ENCODE measurements at regions of chr17 and their contacts with region 1.

Region 1: DNA sequence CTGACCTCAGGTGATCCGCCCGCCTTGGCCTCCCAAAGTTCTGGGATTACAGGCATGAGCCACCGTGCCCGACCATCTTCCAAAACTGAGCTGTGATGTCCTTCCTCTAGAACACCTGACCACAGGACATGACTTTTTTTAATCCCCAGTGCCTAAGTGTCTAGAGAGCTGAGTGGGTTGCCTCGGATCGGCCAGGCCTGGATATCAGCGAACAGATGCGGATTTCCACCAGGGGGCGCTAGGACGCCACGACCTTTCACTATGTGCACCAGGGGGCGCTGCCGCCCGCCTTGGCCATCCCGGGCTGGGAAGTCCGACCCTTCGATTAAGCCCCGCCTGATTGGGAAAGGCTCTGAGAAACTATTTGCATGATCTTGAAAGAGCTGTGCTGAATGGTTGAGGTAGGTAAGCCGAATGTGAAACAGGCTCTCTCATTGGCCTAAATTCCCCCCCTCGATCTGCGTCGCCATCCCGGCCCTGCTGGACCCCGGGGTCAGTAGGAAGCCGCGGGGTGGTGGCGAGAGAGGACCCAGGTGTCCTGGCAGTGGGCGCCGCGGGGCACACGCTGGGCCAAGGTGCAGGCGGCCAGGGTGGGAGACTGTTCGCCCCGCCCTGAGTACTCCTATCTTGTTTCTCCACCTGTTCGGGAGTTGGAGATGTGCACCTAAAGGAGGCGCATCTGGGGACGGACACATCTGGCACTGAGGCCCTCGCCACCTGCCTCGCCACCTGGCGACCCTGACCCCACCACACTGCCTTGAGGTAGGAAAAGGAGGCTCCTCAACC is at the start of gene ACBD4:
- DNase-seq: peak; percentile 94 to 95
- ATAC-seq: peak; percentile 89
- H3K4me3 ChIP-seq: peak within 1 kb of the TSS; percentile 62 to 88 (median 70)
- H3K27ac ChIP-seq: peak within 1 kb of the TSS; percentile 79 to 89 (median 80)
- H3K4me1 ChIP-seq: peaks cover 25 to 31% of the 10 kb centered on the region in 2 donors
- H3K27me3 ChIP-seq: no peaks in the 10 kb centered on the region
- CTCF ChIP-seq: peak; percentile 100
- POLR2A ChIP-seq: peak; percentile 44 to 52
- total RNA-seq, gene ACBD4: 2.2 to 3.2 (median 2.5) TPM

Region 2: GRCh38 chr17:44919885-44920564 is 215.4 kb before region 1 on chr17:
- in situ Hi-C with region 1: loop called in 2 of 4 experiments (anchors 10 to 25 kb)
- intact Hi-C with region 1: loop called (anchors 1 kb)
- DNase-seq: peak; percentile 66 to 73
- ATAC-seq: peak; percentile 91 to 92
- H3K4me3 ChIP-seq: no peak overlapping the region
- H3K27ac ChIP-seq: no peak overlapping the region
- H3K4me1 ChIP-seq: peaks cover 0 to 8% of the 10 kb centered on the region in 2 donors
- H3K27me3 ChIP-seq: no peaks in the 10 kb centered on the region
- CTCF ChIP-seq: peak; percentile 70 to 88 (median 81)
- POLR2A ChIP-seq: no peak

Region 3: GRCh38 chr17:45098869-45099616 is 36.3 kb before region 1 on chr17:
- in situ Hi-C with region 1: no loop called
- intact Hi-C with region 1: loop called (anchors 2 kb)
- DNase-seq: peak; percentile 80 to 89
- ATAC-seq: peak; percentile 79 to 83
- H3K4me3 ChIP-seq: no peak overlapping the region
- H3K27ac ChIP-seq: peak overlapping the region; percentile 18 to 97 (median 80)
- H3K4me1 ChIP-seq: peaks cover 41 to 60% of the 10 kb centered on the region in 2 donors
- H3K27me3 ChIP-seq: no peaks in the 10 kb centered on the region
- CTCF ChIP-seq: peak; percentile 88 to 94 (median 91)
- POLR2A ChIP-seq: no peak

Region 4: DNA sequence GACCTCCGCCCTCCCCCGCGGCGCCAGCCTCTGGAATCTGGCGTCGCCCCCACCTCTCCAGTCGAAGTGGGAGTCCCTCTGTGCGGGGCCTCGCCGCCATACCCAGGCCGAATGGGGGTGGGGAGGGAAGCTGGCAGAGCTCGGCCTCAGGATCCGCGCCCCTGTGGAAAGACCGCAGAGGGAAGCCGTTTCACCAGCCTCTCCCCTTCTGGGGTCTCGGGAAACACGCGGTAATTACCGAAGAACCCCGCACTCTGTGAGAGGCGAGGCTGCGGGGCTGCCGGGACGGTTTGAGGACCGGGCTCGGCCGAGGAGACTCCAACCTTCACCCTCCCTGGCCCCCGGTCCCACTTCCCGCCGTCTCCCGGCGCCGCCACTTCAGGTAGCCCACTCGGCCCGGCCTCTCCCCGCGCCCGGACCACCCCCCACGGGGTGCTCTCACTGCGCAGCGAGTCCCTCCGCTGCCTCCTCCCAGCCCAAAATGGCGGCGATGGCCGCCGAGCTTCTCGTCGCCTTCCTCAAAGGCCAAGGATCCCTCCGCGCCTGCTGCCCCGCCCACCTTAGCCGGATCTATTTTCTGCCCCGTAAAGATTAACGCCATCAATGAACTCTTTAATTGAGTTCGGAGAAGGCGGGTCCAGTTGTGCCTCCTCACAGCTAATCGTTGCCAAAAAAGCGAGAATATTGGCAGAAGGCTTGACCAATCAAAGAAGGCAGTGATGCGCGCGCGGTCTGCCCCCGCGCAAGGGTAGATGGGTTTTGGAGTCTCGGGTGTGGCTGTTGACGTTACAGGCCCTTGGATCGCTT is 25.8 kb after region 1 on chr17:
- in situ Hi-C with region 1: no loop called
- intact Hi-C with region 1: loop called (anchors 1 kb)
- DNase-seq: peak; percentile 98 to 99
- ATAC-seq: peak; percentile 94 to 98
- H3K4me3 ChIP-seq: peak overlapping the region; percentile 85 to 99 (median 92)
- H3K27ac ChIP-seq: peak overlapping the region; percentile 96 to 100 (median 100)
- H3K4me1 ChIP-seq: peaks cover 38 to 45% of the 10 kb centered on the region in 2 donors
- H3K27me3 ChIP-seq: no peaks in the 10 kb centered on the region
- CTCF ChIP-seq: peak in 2 of 5 experiments; percentile 25 to 40
- POLR2A ChIP-seq: peak; percentile 94 to 95